Activated CD4-positive, alpha-beta T cell treated with anti-CD3 and anti-CD28 coated beads for 36 hours (primary cell): ENCODE measurements at regions of chr19 and their contacts with region 1.

Region 1: DNA sequence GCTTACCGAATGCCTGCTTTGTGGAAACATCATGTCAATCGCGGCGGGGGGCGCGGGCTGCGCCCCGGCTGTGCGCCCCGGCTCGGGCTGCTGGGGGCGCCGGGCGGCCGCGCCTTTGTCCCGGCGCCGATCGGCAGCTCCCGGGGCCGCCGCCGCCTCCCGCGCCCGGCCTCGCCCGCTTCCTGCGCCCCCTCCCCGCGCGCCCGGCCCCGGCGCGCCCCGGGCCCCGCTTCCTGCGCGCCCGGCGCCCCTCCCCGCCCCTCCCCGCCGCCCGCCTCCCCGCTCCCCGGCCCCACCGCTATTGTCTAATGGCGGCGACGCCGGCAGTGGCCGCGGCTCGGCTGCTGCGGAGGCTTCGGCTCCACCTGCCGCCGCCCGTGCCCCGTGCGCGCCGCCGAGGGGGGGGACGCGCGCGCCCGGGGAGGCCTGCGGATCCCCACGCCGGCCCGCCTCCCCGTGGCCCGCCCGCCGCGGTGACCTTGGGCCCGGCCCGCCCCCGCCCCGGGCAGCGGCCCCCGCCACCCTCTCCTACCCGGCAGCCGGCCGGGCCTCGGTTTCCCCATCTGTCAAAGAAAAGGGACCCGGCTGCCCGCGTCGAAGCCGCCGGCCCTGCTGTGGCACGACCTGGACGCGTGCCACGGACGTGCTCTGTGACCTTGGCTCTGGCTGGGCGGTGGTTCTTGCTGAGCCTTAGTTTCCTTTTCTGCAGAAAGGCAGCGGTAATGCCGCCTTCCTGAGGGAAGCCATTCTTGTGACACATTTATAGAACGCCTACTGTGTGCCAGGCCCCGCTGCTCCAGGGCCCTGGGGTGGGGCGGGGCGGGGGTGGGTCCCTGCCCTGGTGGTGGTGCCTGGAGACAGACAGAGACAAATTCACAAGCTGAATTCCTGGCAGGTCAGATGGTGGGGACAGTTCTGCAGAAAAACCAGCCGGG is at the start of gene TLE5:
- DNase-seq: peak; percentile 83
- ATAC-seq: peak; percentile 71
- H3K4me3 Mint-ChIP-seq: peak within 1 kb of the TSS; percentile 82
- H3K27ac Mint-ChIP-seq: peak within 1 kb of the TSS; percentile 97
- H3K4me1 Mint-ChIP-seq: peaks cover 35% of the 10 kb centered on the region
- H3K27me3 Mint-ChIP-seq: no peaks in the 10 kb centered on the region
- total RNA-seq, gene TLE5: 349 to 533 TPM

Region 2: DNA sequence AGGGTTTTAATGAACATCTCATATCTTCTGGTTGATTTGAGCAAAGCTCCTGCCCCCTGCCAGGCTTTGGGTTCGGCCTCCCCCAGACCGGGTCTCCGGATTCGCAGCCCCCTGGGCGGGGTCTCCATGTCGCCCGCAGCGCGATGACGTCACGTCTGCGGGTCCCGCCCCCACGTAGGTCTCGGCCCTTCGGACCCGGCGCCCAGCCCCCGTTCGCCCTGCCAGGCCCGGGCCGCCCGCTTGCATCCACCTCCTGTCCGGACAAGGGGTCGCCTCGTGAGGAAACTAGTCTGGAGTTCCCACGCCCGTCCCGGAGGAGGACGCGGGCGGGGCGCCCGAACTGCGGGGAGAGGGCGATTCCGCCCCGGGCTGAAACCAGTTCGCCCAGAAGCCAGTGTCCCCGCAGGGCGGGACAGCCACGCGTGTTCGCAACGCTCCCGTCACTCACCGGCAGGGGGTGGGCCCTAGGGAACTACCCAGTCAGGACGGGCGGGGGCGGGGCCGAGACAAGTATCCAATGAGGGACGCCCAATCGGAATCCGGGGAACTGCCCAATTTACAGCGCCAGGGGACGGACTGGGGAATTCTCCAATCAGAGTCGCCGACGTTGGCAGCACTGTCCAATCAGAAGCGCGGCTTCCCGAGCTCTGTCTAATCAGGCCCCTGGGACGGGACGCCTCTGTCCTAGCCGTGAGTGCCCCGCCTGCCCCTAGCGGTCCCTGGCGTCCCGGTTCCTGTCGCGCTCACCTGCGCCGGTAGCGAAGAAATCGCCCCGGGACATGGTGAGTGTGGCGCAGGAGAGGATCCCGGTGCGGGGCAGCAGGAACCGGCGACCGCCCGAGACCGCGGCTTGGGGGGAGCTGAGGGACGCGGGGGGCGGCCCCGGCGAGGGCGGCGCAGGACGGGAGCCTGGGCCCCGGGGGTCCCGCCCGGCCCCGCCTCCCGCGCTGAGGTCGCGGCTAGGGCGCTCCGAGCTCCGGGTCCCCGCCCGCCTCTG is 221.3 kb before region 1 on chr19 and contains the start of gene ZNF555:
- CTCF ChIA-PET with region 1: no interaction called
- POLR2A ChIA-PET with region 1: no interaction called
- intact Hi-C with region 1: no loop called
- DNase-seq: peak; percentile 99
- ATAC-seq: peak; percentile 100
- H3K4me3 Mint-ChIP-seq: peak within 1 kb of the TSS; percentile 77
- H3K27ac Mint-ChIP-seq: peak within 1 kb of the TSS; percentile 55
- H3K4me1 Mint-ChIP-seq: peaks cover 11% of the 10 kb centered on the region
- H3K27me3 Mint-ChIP-seq: no peaks in the 10 kb centered on the region
- total RNA-seq, gene ZNF555: 1.9 TPM

Region 3: GRCh38 chr19:3047425-3048189 is 14.8 kb before region 1 on chr19:
- CTCF ChIA-PET with region 1: interaction called, 3 read pairs
- POLR2A ChIA-PET with region 1: interaction called, 6 read pairs
- intact Hi-C with region 1: loop called in 1 of 2 experiments (anchors 2 kb)
- DNase-seq: peak; percentile 86
- ATAC-seq: peak; percentile 93
- H3K4me3 Mint-ChIP-seq: peak overlapping the region; percentile 67
- H3K27ac Mint-ChIP-seq: peak overlapping the region; percentile 79
- H3K4me1 Mint-ChIP-seq: peaks cover 9% of the 10 kb centered on the region
- H3K27me3 Mint-ChIP-seq: no peaks in the 10 kb centered on the region

Region 4: DNA sequence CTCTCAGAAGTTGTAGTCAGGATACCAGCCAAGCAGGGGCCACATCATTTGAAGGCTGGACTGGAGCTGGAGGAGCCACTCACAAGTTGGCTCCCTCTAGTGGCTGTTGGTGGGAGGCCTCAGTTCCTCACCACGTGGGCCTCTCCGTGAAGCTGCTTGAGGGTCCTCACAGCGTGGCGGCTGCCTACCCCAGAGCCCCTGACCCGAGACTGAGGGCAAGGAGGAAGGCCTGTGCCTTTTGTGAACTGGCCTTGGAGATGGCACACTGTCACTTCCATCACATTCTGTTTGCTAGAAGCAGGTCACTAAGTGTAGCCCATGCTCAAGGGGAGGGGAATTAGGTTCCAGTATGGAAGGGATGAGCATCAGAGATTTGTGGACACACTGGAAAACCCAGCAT is 46.3 kb after region 1 on chr19:
- CTCF ChIA-PET with region 1: interaction called, 5 read pairs
- POLR2A ChIA-PET with region 1: no interaction called
- intact Hi-C with region 1: loop called in 1 of 2 experiments (anchors 5 kb)
- DNase-seq: peak; percentile 84
- ATAC-seq: peak; percentile 80
- H3K4me3 Mint-ChIP-seq: no peak overlapping the region
- H3K27ac Mint-ChIP-seq: no peak overlapping the region
- H3K4me1 Mint-ChIP-seq: peaks cover 6% of the 10 kb centered on the region
- H3K27me3 Mint-ChIP-seq: no peaks in the 10 kb centered on the region

Region 5: GRCh38 chr19:3398114-3398899 is 335.9 kb after region 1 on chr19:
- CTCF ChIA-PET with region 1: no interaction called
- POLR2A ChIA-PET with region 1: no interaction called
- intact Hi-C with region 1: no loop called
- DNase-seq: no peak
- ATAC-seq: no peak
- H3K4me3 Mint-ChIP-seq: no peak overlapping the region
- H3K27ac Mint-ChIP-seq: no peak overlapping the region
- H3K4me1 Mint-ChIP-seq: no peaks in the 10 kb centered on the region
- H3K27me3 Mint-ChIP-seq: no peaks in the 10 kb centered on the region